Motor neuron (in vitro differentiated cells): ENCODE measurements at regions of chr3 and their contacts with region 1.

Region 1: GRCh38 chr3:183884427-183885296 is at the start of gene PARL:
- ATAC-seq: peak; percentile 98 to 100 (median 99)
- H3K4me3 ChIP-seq: peak within 1 kb of the TSS; percentile 60 to 91 (median 66)
- H3K27ac ChIP-seq: peak within 1 kb of the TSS; percentile 75 to 87
- H3K4me1 ChIP-seq: peaks cover 13 to 15% of the 10 kb centered on the region in 2 donors
- total RNA-seq, gene PARL: 33.7 to 68.8 (median 47.3) TPM

Region 2: GRCh38 chr3:184250167-184250828 is 365.6 kb after region 1 on chr3:
- in situ Hi-C with region 1: loop called in 3 of 9 experiments (anchors 25 kb)
- ATAC-seq: peak; percentile 36 to 52 (median 45)
- H3K4me3 ChIP-seq: peak overlapping the region; percentile 70 to 96 (median 80)
- H3K27ac ChIP-seq: peak overlapping the region; percentile 77 to 98
- H3K4me1 ChIP-seq: peaks cover 7 to 9% of the 10 kb centered on the region in 2 donors